Heart left ventricle (tissue), 16 donors: ENCODE measurements at regions of chr11 and their contacts with region 1.

Region 1: DNA sequence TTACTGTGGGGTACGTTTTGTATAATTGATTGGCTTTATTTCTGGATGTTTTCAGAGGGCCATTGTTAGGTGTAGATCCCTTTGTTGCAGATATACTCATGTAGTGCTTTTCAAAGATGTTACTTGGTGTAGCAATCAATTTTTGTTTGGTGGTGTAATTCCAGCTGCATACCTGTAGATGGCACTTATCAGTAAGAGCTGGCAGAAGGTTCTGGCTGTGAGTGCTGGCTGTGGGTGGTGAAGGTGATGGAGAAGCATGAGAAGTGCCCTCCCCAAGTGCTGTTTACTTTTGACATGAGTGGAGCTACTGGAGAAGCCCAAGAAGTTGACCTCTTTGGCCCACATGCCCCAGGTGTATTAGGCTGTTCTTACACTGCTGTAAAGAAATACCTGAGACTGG is 1074.9 kb downstream of the FAM181B start:
- DNase-seq: no peak
- ATAC-seq: no peak
- H3K4me3 ChIP-seq: no peak overlapping the region
- H3K27ac ChIP-seq: no peak overlapping the region
- H3K4me1 ChIP-seq: no peaks in the 10 kb centered on the region
- H3K27me3 ChIP-seq: no peaks in the 10 kb centered on the region
- CTCF ChIP-seq: no peak
- POLR2A ChIP-seq: no peak

Region 2: DNA sequence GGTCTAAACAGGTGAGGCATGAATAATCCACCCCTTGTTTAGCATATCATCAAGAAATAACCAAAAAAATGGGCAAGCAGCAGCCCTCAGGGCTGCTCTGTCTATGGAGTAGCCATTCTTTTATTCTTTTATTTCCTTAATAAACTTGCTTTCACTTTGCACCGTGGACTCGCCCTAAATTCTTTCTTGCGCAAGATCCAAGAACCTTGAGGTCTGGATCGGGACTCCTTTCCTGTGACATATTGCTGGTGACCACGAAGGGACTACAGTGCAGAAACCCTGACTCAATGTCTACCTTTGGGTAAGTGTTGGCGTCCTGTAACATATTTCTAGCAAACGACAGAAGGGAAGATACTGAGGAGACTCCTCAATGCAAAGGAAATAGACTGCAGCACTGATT is 24.2 kb before region 1 on chr11:
- intact Hi-C with region 1: no loop called
- DNase-seq: no peak
- ATAC-seq: no peak
- H3K4me3 ChIP-seq: no peak overlapping the region
- H3K27ac ChIP-seq: no peak overlapping the region
- H3K4me1 ChIP-seq: no peaks in the 10 kb centered on the region
- H3K27me3 ChIP-seq: peaks cover 0 to 5% (median 0%) of the 10 kb centered on the region in 9 donors
- CTCF ChIP-seq: no peak
- POLR2A ChIP-seq: no peak

Region 3: DNA sequence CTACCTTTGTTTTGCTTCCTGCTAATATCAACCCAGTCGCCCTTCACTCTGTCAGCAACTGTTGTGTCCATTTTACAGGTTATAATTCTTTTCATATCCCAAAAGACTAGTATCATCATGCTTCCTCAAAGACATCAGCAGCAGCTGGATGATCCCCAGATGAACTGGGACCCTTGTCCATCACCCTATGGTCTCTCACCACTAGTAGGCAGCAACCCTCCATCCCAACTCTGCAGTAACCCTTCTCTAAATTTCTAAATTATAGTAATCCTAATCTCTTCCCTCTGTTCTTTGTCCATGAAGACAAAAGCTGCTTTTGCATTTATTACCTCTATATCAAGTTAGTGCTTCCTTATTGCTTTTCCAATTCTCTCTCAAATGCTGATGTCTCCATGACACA is 49.2 kb after region 1 on chr11:
- intact Hi-C with region 1: loop called in 1 of 10 experiments (anchors 10 kb)
- DNase-seq: no peak
- ATAC-seq: no peak
- H3K4me3 ChIP-seq: no peak overlapping the region
- H3K27ac ChIP-seq: no peak overlapping the region
- H3K4me1 ChIP-seq: no peaks in the 10 kb centered on the region
- H3K27me3 ChIP-seq: no peaks in the 10 kb centered on the region
- CTCF ChIP-seq: no peak
- POLR2A ChIP-seq: no peak